ENCODE measurements at regions of chr13 and their contacts with region 1.

Region 1: GRCh38 chr13:40637643-40638042 is 28.8 kb downstream of the FOXO1 start:
- DNase-seq: no peak
- ATAC-seq: peak; percentile 69
- H3K4me3 Mint-ChIP-seq: peak overlapping the region; percentile 64
- H3K27ac Mint-ChIP-seq: peak overlapping the region; percentile 67
- H3K4me1 Mint-ChIP-seq: peaks cover 93% of the 10 kb centered on the region
- H3K27me3 Mint-ChIP-seq: no peaks in the 10 kb centered on the region
- CTCF ChIP-seq: no peak

Region 2: DNA sequence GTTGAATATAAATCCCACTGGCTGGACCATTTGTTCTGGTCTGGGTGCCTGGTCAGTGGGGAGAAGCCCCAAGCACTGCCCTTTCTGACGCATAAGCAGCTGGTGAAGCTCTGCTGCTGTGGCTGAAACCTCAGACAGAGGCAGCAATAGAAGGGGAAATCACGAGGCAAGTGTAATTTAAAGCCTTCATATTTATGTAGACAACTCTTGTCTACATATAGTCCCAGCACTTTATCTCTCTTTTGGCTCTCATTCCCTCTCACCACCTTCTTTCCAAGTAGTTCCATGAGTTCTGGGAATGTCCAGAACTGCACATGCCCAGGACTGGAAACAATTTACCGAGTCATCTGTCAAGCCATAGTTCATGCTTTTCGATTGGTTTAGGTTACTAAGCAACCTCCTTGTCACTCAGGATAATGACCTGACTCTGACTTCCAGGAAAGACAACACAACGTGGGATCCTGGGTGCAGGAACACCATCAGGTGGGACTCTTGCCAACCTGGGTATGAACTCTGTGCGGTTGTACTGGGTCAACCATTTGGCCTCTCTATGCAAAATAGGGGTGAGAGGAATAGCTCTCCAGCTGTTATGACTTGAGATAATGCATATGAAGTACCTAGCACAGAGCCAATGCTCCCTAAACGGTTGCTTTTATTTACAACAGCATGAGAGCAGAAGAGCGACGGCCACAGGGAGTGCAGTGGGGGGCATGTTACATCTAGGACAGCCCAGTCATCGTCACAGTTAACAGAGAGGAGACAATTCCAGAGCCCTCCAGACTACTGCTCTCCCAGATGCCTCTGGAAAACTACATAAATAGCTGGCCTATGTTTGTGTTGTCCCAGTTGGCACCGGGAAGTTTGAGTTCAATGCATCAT is 293.1 kb before region 1 on chr13:
- CTCF ChIA-PET with region 1: no interaction called
- POLR2A ChIA-PET with region 1: no interaction called
- intact Hi-C with region 1: no loop called
- DNase-seq: no peak
- ATAC-seq: peak; percentile 25
- H3K4me3 Mint-ChIP-seq: no peak overlapping the region
- H3K27ac Mint-ChIP-seq: no peak overlapping the region
- H3K4me1 Mint-ChIP-seq: peaks cover 9% of the 10 kb centered on the region
- H3K27me3 Mint-ChIP-seq: no peaks in the 10 kb centered on the region
- CTCF ChIP-seq: no peak

Region 3: DNA sequence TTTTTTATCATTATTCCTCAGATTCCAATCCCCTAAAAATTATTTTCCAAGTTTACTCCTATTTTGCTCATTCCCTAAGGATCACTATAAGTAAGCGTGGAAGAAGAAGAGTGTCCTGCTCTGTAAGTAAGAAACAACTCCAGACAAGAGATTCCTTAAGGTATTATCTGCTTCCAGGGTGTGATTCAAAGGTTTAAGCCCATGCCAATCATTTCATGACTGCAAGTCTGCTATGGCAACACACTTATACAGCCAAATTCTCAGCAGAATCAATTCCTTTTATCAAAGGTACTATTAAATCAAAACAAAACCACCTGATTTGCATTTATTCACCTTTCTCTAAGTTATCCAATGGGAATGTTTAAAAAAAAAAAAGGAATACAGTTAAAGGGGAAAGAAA is 14.9 kb before region 1 on chr13:
- CTCF ChIA-PET with region 1: no interaction called
- POLR2A ChIA-PET with region 1: interaction called, 4 read pairs
- intact Hi-C with region 1: loop called (anchors 2 kb)
- DNase-seq: no peak
- ATAC-seq: no peak
- H3K4me3 Mint-ChIP-seq: no peak overlapping the region
- H3K27ac Mint-ChIP-seq: peak overlapping the region; percentile 53
- H3K4me1 Mint-ChIP-seq: peaks cover 85% of the 10 kb centered on the region
- H3K27me3 Mint-ChIP-seq: no peaks in the 10 kb centered on the region
- CTCF ChIP-seq: no peak

Region 4: DNA sequence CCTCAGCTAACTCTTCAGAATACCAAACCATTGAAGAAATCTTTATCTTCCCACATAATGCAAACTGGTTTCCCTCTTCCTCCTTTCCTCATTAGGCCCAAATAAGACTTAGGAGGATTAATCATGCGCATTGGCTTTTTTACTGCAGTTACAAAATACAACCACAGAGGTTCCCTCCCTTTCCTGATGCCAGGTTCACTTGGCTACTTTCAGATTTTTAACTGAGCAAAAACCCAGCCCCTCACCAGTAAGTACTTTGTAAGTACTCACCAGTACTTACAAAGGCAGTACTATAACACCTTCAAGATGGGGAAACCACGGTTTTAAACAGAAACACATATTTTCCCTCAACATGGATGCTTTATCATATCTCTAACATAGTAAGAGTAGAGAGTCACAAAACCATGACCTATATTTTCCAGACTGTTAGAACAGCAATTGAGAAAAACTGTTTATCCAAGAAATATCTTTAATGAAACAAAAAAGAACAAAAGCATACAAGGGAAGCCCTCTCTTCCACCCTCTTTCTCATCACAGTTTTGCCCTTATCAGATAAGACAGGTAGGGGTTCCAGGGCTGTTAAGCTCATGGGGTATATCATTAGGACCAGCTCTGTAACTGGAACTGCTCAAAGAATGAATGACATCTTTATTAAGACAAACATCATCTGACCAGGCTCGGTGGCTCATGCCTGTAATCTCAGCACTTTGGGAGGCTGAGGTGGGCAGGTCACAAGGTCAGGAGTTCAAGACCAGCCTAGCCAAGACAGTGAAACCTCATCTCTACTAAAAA is 16.1 kb after region 1 on chr13:
- CTCF ChIA-PET with region 1: interaction called, 4 read pairs
- POLR2A ChIA-PET with region 1: interaction called, 13 read pairs
- intact Hi-C with region 1: loop called (anchors 1 kb)
- DNase-seq: no peak
- ATAC-seq: peak; percentile 8
- H3K4me3 Mint-ChIP-seq: peak overlapping the region; percentile 79
- H3K27ac Mint-ChIP-seq: peak overlapping the region; percentile 91
- H3K4me1 Mint-ChIP-seq: peaks cover 94% of the 10 kb centered on the region
- H3K27me3 Mint-ChIP-seq: no peaks in the 10 kb centered on the region
- CTCF ChIP-seq: no peak

Region 5: DNA sequence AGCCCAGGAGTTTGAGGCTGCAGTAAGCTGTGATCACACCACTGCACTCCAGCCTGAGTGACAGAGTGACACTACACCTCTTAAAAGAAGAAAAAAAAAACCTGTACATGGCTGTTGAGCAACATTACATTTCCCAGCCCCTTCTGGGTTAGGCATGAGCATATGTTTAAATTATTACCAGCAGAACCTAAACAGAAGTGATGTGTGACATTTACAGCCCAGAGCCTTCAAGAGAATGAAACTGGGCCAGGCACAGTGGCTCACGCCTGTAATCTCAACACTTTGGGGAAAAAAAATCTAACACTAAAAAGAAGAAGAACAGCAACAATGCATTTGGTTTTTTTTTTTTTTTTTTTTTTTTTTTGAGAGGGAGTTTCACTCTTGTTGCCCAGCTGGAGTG is 95.0 kb after region 1 on chr13:
- CTCF ChIA-PET with region 1: no interaction called
- POLR2A ChIA-PET with region 1: no interaction called
- intact Hi-C with region 1: no loop called
- DNase-seq: no peak
- ATAC-seq: no peak
- H3K4me3 Mint-ChIP-seq: no peak overlapping the region
- H3K27ac Mint-ChIP-seq: no peak overlapping the region
- H3K4me1 Mint-ChIP-seq: no peaks in the 10 kb centered on the region
- H3K27me3 Mint-ChIP-seq: no peaks in the 10 kb centered on the region
- CTCF ChIP-seq: no peak

Measured in activated B cell treated with CpG ODN at 0.5 μM for 24 hours (primary cell).